CD4-positive, alpha-beta T cell (primary cell): ENCODE measurements at regions of chr1 and their contacts with region 1.

Region 1: GRCh38 chr1:9874959-9875635 is 35.0 kb downstream of the CTNNBIP1 start:
- DNase-seq: peak; percentile 62 to 87 (median 68)
- ATAC-seq: peak; percentile 99
- H3K4me3 ChIP-seq: no peak overlapping the region
- H3K4me3 Mint-ChIP-seq: no peak overlapping the region
- H3K27ac ChIP-seq: no peak overlapping the region
- H3K27ac Mint-ChIP-seq: no peak overlapping the region
- H3K4me1 ChIP-seq: peaks cover 7% of the 10 kb centered on the region
- H3K4me1 Mint-ChIP-seq: peaks cover 7% of the 10 kb centered on the region
- H3K27me3 ChIP-seq: no peaks in the 10 kb centered on the region
- H3K27me3 Mint-ChIP-seq: no peaks in the 10 kb centered on the region
- CTCF ChIP-seq: peak; percentile 93

Region 2: GRCh38 chr1:9494929-9495758 is 380.0 kb before region 1 on chr1:
- CTCF ChIA-PET with region 1: no interaction called
- POLR2A ChIA-PET with region 1: no interaction called
- intact Hi-C with region 1: no loop called
- DNase-seq: peak; percentile 40 to 86 (median 57)
- ATAC-seq: peak; percentile 86
- H3K4me3 ChIP-seq: peak overlapping the region; percentile 43
- H3K4me3 Mint-ChIP-seq: peak overlapping the region; percentile 72
- H3K27ac ChIP-seq: no peak overlapping the region
- H3K27ac Mint-ChIP-seq: no peak overlapping the region
- H3K4me1 ChIP-seq: peaks cover 13% of the 10 kb centered on the region
- H3K4me1 Mint-ChIP-seq: peaks cover 6% of the 10 kb centered on the region
- H3K27me3 ChIP-seq: no peaks in the 10 kb centered on the region
- H3K27me3 Mint-ChIP-seq: peaks cover 4% of the 10 kb centered on the region
- CTCF ChIP-seq: peak; percentile 93

Region 3: GRCh38 chr1:9687120-9687873 is 187.8 kb before region 1 on chr1:
- CTCF ChIA-PET with region 1: no interaction called
- POLR2A ChIA-PET with region 1: no interaction called
- intact Hi-C with region 1: no loop called
- DNase-seq: peak; percentile 28 to 84 (median 55)
- ATAC-seq: peak; percentile 37
- H3K4me3 ChIP-seq: peak overlapping the region; percentile 61
- H3K4me3 Mint-ChIP-seq: peak overlapping the region; percentile 88
- H3K27ac ChIP-seq: peak overlapping the region; percentile 37 to 79
- H3K27ac Mint-ChIP-seq: peak overlapping the region; percentile 74
- H3K4me1 ChIP-seq: peaks cover 85% of the 10 kb centered on the region
- H3K4me1 Mint-ChIP-seq: peaks cover 71% of the 10 kb centered on the region
- H3K27me3 ChIP-seq: no peaks in the 10 kb centered on the region
- H3K27me3 Mint-ChIP-seq: no peaks in the 10 kb centered on the region
- CTCF ChIP-seq: no peak

Region 4: DNA sequence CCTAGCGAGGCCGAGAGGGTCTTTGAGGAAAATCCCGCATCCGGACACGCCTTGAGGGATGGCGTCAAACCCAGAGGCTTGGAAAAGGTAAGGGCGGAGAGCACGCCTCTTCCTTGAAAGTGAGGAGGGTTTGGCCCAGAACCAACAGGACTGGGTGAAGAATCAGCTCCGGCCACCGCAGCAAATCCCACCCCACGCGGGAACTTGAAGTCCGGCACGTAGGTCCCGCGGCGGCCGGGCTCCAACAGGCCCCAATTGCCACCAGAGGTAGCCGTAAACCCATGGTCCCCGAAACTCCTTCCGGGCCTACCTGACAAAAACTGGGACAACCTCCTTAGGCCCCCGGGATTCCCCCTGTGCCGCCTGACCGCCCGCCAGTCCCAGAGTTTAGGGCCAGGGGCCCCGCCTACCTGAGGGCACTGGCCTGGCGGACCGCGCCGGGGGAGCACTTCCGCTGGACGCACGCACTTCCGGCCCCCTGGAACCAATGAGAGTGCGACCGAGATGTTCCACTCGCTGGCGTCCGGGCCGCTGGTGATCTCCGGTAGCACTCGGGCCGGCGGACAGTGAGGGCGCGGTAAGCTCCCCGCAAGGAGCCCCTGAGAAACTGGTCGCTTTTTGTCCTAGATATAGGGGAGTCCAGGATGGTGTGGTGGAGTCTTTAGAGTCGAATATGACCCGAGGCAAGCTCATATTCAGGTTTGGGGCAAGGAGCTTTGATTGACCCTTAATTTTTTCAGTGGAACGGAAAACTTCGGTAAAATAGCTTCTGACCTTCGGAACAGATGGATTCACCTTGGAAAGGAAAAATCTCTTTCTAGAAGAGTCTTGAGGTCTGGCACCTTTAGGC is 68.1 kb after region 1 on chr1 and contains the starts of genes LZIC and NMNAT1:
- CTCF ChIA-PET with region 1: no interaction called
- POLR2A ChIA-PET with region 1: no interaction called
- intact Hi-C with region 1: loop called (anchors 1 kb)
- DNase-seq: peak; percentile 76 to 94 (median 85)
- ATAC-seq: peak; percentile 92
- H3K4me3 ChIP-seq: peak within 1 kb of the TSS; percentile 99
- H3K4me3 Mint-ChIP-seq: peak within 1 kb of the TSS; percentile 98
- H3K27ac ChIP-seq: peak within 1 kb of the TSS; percentile 73 to 90
- H3K27ac Mint-ChIP-seq: peak within 1 kb of the TSS; percentile 91
- H3K4me1 ChIP-seq: peaks cover 23% of the 10 kb centered on the region
- H3K4me1 Mint-ChIP-seq: peaks cover 20% of the 10 kb centered on the region
- H3K27me3 ChIP-seq: no peaks in the 10 kb centered on the region
- H3K27me3 Mint-ChIP-seq: no peaks in the 10 kb centered on the region
- CTCF ChIP-seq: no peak
- total RNA-seq, gene LZIC: 16.0 to 18.1 TPM
- total RNA-seq, gene NMNAT1: 0.66 to 1.0 TPM

Region 5: DNA sequence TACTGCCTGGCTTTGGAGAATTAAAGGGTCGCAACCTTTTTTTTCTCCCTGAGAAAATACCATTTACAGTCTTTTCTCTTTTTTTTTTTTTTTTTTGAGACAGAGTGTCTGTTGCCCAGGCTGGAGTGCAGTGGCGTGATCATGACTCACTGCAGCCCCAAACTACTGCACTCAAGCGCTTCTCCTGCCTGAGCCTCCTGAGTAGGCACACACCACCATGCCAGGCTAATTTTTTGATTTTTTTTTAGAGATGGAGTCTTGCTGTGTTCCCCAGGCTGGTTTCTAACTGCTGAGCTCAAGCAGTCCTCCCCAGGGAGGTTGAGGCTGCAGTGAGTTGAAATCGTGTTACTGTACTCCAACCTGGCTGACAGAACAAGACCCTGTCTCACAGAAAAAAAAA is 182.2 kb after region 1 on chr1:
- CTCF ChIA-PET with region 1: no interaction called
- POLR2A ChIA-PET with region 1: no interaction called
- intact Hi-C with region 1: no loop called
- DNase-seq: no peak
- ATAC-seq: no peak
- H3K4me3 ChIP-seq: no peak overlapping the region
- H3K4me3 Mint-ChIP-seq: no peak overlapping the region
- H3K27ac ChIP-seq: no peak overlapping the region
- H3K27ac Mint-ChIP-seq: no peak overlapping the region
- H3K4me1 ChIP-seq: no peaks in the 10 kb centered on the region
- H3K4me1 Mint-ChIP-seq: peaks cover 17% of the 10 kb centered on the region
- H3K27me3 ChIP-seq: no peaks in the 10 kb centered on the region
- H3K27me3 Mint-ChIP-seq: no peaks in the 10 kb centered on the region
- CTCF ChIP-seq: no peak

Region 6: DNA sequence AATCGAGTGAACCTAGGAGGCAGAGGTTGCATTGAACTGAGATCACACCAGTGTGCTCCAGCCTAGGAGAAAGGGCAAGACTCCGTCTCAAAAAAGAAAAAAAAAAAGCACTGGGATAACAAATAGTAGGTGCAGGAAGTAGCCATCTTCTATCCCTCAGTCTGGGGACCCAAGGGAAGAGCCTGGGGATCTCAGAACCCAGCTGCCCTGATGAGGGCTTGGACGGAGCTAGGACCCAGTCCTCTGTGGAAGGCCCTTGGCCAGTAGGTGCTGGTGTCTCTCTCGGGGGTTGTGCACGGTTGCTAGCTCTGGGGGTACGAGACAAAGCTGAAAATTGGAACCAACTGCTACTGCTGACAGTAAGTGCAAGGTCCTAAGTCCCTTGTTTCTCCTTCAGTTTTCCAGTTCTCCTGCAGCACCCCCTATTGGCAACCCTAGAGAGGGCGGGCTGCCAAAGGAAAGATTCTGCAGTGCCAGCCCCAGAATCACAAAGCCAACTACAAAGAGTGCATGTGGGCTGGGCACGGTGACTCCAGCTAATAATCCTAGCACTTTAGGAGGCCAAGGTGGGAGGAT is 277.7 kb after region 1 on chr1:
- CTCF ChIA-PET with region 1: no interaction called
- POLR2A ChIA-PET with region 1: no interaction called
- intact Hi-C with region 1: loop called in 1 of 2 experiments (anchors 5 kb)
- DNase-seq: peak in 6 of 14 experiments; percentile 2 to 31 (median 13)
- ATAC-seq: no peak
- H3K4me3 ChIP-seq: no peak overlapping the region
- H3K4me3 Mint-ChIP-seq: no peak overlapping the region
- H3K27ac ChIP-seq: no peak overlapping the region
- H3K27ac Mint-ChIP-seq: no peak overlapping the region
- H3K4me1 ChIP-seq: no peaks in the 10 kb centered on the region
- H3K4me1 Mint-ChIP-seq: no peaks in the 10 kb centered on the region
- H3K27me3 ChIP-seq: no peaks in the 10 kb centered on the region
- H3K27me3 Mint-ChIP-seq: no peaks in the 10 kb centered on the region
- CTCF ChIP-seq: peak; percentile 33